Left cardiac atrium (tissue), 4 donors: ENCODE measurements at regions of chr14 and their contacts with region 1.

Region 1: DNA sequence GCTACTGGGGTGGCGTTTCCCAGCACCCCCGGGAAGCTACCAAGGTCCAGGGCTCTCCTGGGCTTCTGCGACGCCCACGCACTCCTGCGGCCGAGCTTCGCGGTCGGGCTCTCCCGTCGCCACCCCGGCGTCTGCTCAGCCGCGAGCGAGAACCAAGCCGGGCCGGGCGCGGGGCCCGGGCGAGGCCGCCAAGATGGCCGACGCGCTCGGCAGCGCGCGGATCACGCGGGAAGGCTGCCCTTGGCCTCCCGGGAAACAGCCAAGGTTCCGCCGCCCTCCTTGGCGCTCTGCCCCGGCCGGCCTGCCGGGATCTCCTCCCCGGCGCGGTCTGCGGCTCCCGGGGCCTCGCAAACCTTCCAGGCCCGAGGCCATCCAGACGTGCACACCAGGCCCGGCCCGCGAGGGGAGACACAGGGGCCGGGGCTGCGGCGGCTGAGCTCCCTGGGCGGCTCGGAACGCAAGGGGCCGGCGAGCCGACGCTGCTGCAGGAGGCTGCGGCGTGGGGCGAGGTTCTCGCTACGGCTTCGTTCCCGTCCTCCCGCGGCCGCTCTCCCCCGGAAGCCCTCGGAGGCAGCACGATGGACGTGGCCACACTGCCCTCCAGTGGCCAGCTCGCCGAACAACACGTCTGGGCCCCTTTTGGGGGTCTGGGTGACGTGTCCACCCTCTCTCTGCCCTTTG is 23.5 kb upstream of the ZFP36L1 start:
- DNase-seq: peak; percentile 93
- ATAC-seq: peak; percentile 91 to 92

Region 2: DNA sequence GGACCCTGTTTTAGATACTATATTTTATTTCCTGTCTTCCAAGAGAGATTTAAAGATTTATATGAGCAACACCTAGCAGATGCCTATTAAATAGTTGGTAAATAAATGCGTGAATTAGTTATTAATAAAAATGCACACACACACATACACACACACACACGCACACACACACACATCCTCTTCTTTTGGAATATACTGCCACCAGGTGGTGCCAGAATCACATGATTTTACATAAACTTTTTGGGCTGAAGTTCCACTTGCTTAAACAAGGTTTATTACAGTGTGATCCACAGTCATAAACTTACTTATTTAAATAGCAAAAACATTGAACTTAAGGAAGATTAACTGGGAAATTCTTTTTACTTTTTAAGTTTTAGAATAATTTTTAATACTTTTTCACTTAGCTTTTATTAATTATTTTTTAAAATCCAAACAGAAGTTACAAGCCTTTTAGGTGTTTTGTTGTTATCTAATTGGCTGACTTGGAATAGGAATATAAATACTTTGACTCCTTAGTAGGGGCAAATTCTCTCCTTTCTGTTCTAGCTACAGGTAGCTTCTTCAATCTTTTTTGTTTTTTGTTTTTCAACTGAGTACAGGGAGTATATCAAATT is 979.3 kb before region 1 on chr14:
- intact Hi-C with region 1: loop called in 1 of 2 experiments (anchors 5 kb)
- DNase-seq: peak; percentile 47
- ATAC-seq: no peak

Region 3: GRCh38 chr14:67943947-67944346 is 872.5 kb before region 1 on chr14:
- intact Hi-C with region 1: loop called (anchors 2 to 5 kb)
- DNase-seq: peak; percentile 72
- ATAC-seq: peak; percentile 69 to 75

Region 4: GRCh38 chr14:68534276-68534675 is 282.1 kb before region 1 on chr14:
- intact Hi-C with region 1: no loop called
- DNase-seq: no peak
- ATAC-seq: no peak

Region 5: GRCh38 chr14:68548194-68549056 is 268.0 kb before region 1 on chr14:
- intact Hi-C with region 1: loop called in 1 of 2 experiments (anchors 10 kb)
- DNase-seq: peak; percentile 93
- ATAC-seq: peak; percentile 89 to 90

Region 6: DNA sequence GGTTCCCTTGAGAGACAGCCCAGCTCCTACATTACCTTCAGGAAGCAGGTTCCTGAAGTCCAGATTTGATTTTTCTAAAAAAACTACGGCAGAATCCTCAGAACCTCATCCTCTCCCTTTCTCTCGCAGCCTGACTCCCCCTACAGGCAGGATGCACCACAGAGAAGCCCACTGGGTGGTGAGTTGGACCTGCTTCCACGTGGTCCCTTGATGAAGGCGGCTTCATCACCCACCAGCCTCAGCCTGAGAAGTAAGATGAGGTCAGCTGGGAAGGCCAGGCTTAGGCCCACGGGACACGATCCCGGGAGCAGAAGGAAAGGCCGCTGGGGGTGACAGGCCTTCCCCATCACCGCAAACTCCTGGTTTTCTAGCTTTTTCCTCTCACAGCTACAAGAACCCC is 79.7 kb after region 1 on chr14:
- intact Hi-C with region 1: no loop called
- DNase-seq: no peak
- ATAC-seq: no peak